GM10248 (cell line): ENCODE measurements at regions of chr15 and their contacts with region 1.

Region 1: GRCh38 chr15:52481915-52482314 is 46.8 kb downstream of the MYO5A start:
- DNase-seq: peak; percentile 65
- CTCF ChIP-seq: no peak

Region 2: GRCh38 chr15:52466134-52466701 is 15.7 kb before region 1 on chr15:
- CTCF ChIA-PET with region 1: interaction called, 12 read pairs
- POLR2A ChIA-PET with region 1: no interaction called
- DNase-seq: peak; percentile 89
- CTCF ChIP-seq: peak; percentile 48

Region 3: DNA sequence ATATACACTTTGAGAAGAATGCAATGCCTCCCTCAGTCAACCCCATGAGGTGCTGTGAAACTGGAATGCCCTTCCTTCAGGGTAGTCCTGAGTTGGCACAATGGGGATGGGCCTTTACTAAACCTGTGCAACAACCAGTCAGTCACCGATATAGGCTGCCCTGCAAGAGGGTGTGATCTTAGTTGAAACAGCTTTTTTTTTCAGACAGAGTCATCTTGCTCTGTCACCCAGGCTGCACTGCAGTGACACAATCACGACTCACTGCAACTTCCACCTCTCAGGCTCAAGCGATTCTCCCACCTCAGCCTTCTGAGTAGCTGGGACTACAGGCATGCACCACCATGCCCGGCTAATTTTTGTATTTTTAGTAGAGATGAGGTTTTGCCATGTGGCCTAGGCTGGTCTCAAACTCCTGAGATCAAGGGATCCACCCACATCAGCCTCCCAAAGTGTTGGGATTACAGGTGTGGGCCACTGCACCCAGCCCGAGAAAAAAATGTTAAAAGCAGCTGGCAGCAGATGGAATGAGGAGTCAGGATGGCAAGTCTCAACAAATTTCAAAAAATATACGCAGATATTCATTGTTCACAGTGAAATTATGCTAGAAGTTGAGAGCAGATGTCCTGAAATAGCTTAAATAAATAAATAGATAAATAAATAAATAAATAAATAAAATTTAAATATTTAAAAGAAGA is 15.0 kb after region 1 on chr15:
- CTCF ChIA-PET with region 1: interaction called, 19 read pairs
- POLR2A ChIA-PET with region 1: no interaction called
- DNase-seq: no peak
- CTCF ChIP-seq: no peak

Region 4: GRCh38 chr15:52558196-52558595 is 76.3 kb after region 1 on chr15:
- CTCF ChIA-PET with region 1: no interaction called
- POLR2A ChIA-PET with region 1: no interaction called
- DNase-seq: no peak
- CTCF ChIP-seq: no peak